ENCODE measurements at regions of chr13 and their contacts with region 1.

Region 1: GRCh38 chr13:99528547-99528946 is 27.3 kb downstream of the TM9SF2 start:
- DNase-seq: peak in 4 of 5 donors; percentile 40 to 47 (median 42)
- H3K4me3 ChIP-seq: no peak overlapping the region
- H3K4me3 Mint-ChIP-seq: no peak overlapping the region
- H3K27ac ChIP-seq: no peak overlapping the region
- H3K27ac Mint-ChIP-seq: peak overlapping the region in 1 of 7 donors; percentile 53
- H3K4me1 ChIP-seq: peaks cover 21% of the 10 kb centered on the region
- H3K4me1 Mint-ChIP-seq: peaks cover 39 to 61% (median 45%) of the 10 kb centered on the region in 4 donors
- H3K27me3 ChIP-seq: no peaks in the 10 kb centered on the region
- H3K27me3 Mint-ChIP-seq: no peaks in the 10 kb centered on the region

Region 2: GRCh38 chr13:99577934-99578917 is 49.7 kb after region 1 on chr13:
- CTCF ChIA-PET with region 1: interaction called, 10 read pairs
- POLR2A ChIA-PET with region 1: interaction called, 4 read pairs
- intact Hi-C with region 1: no loop called
- DNase-seq: no peak
- H3K4me3 ChIP-seq: no peak overlapping the region
- H3K4me3 Mint-ChIP-seq: no peak overlapping the region
- H3K27ac ChIP-seq: no peak overlapping the region
- H3K27ac Mint-ChIP-seq: peak overlapping the region in 4 of 7 donors; percentile 4 to 65 (median 32)
- H3K4me1 ChIP-seq: no peaks in the 10 kb centered on the region
- H3K4me1 Mint-ChIP-seq: peaks cover 0 to 11% (median 5%) of the 10 kb centered on the region in 4 donors
- H3K27me3 ChIP-seq: no peaks in the 10 kb centered on the region
- H3K27me3 Mint-ChIP-seq: no peaks in the 10 kb centered on the region

Region 3: GRCh38 chr13:99614385-99614885 is 85.9 kb after region 1 on chr13:
- CTCF ChIA-PET with region 1: interaction called, 30 read pairs
- POLR2A ChIA-PET with region 1: no interaction called
- intact Hi-C with region 1: loop called (anchors 1 kb)
- DNase-seq: peak in 3 of 5 donors; percentile 13 to 23 (median 16)
- H3K4me3 ChIP-seq: no peak overlapping the region
- H3K4me3 Mint-ChIP-seq: no peak overlapping the region
- H3K27ac ChIP-seq: no peak overlapping the region
- H3K27ac Mint-ChIP-seq: no peak overlapping the region
- H3K4me1 ChIP-seq: peaks cover 13% of the 10 kb centered on the region
- H3K4me1 Mint-ChIP-seq: peaks cover 22 to 48% (median 33%) of the 10 kb centered on the region in 4 donors
- H3K27me3 ChIP-seq: no peaks in the 10 kb centered on the region
- H3K27me3 Mint-ChIP-seq: no peaks in the 10 kb centered on the region

Region 4: GRCh38 chr13:100235311-100235901 is 706.9 kb after region 1 on chr13:
- CTCF ChIA-PET with region 1: interaction called, 7 read pairs
- POLR2A ChIA-PET with region 1: no interaction called
- intact Hi-C with region 1: loop called (anchors 1 kb)
- DNase-seq: peak in 4 of 5 donors; percentile 37 to 52 (median 44)
- H3K4me3 ChIP-seq: no peak overlapping the region
- H3K4me3 Mint-ChIP-seq: peak overlapping the region in 2 of 8 donors; percentile 13 to 70
- H3K27ac ChIP-seq: no peak overlapping the region
- H3K27ac Mint-ChIP-seq: no peak overlapping the region
- H3K4me1 ChIP-seq: peaks cover 6% of the 10 kb centered on the region
- H3K4me1 Mint-ChIP-seq: peaks cover 4 to 5% (median 4%) of the 10 kb centered on the region in 4 donors
- H3K27me3 ChIP-seq: no peaks in the 10 kb centered on the region
- H3K27me3 Mint-ChIP-seq: peaks cover 0 to 1% of the 10 kb centered on the region in 2 donors